HAP-1 (cell line): ENCODE measurements at regions of chr7 and their contacts with region 1.

Region 1: DNA sequence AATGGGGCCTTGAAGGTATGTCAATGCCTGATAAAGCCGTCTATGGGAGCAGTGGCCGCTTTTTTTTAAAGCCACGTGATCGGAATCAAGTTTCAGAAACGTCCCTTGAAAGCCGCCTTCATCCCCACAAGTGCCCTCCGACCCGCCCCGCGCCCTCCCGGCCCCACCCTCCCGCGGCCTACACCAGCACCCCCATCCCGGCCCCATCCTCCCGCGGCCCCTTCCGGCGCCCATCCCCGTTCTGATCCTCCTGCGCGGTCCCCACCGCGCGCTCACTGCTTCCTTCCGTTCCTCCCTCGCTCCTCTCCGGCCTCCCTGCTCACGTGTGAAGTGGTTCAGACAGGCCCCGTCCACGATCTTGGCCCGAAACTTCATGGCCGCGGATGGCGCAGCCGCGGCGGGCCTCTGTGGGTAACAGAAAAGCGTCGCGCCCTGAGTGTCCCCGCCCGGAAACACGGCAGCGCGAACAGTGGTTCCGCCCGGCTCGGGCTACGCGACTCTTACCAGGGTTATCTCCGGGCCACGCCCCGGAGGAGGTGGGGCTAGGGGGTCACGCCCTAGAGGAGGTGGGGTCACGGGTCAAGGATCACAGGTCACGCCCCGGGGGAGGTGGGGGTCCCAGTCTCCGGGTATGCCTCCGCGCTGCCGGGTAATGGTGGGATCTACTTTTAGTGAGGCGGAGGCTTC is at the start of gene HUS1:
- DNase-seq: peak; percentile 78 to 94
- H3K4me3 ChIP-seq: peak within 1 kb of the TSS; percentile 60
- H3K4me1 ChIP-seq: peaks cover 23% of the 10 kb centered on the region
- H3K27me3 ChIP-seq: no peaks in the 10 kb centered on the region

Region 2: GRCh38 chr7:48088559-48089045 is 109.3 kb after region 1 on chr7:
- in situ Hi-C with region 1: loop called (anchors 25 kb)
- DNase-seq: peak; percentile 46 to 71
- H3K4me3 ChIP-seq: peak overlapping the region; percentile 64
- H3K4me1 ChIP-seq: peaks cover 20% of the 10 kb centered on the region
- H3K27me3 ChIP-seq: no peaks in the 10 kb centered on the region

Region 3: GRCh38 chr7:48213226-48213625 is 233.9 kb after region 1 on chr7:
- in situ Hi-C with region 1: no loop called
- DNase-seq: no peak
- H3K4me3 ChIP-seq: no peak overlapping the region
- H3K4me1 ChIP-seq: no peaks in the 10 kb centered on the region
- H3K27me3 ChIP-seq: no peaks in the 10 kb centered on the region

Region 4: GRCh38 chr7:48251766-48252165 is 272.5 kb after region 1 on chr7:
- in situ Hi-C with region 1: loop called (anchors 25 kb)
- DNase-seq: peak in 1 of 2 experiments; percentile 20
- H3K4me3 ChIP-seq: no peak overlapping the region
- H3K4me1 ChIP-seq: peaks cover 14% of the 10 kb centered on the region
- H3K27me3 ChIP-seq: no peaks in the 10 kb centered on the region